Colonic mucosa (tissue), 4 donors: ENCODE measurements at regions of chr10 and their contacts with region 1.

Region 1: GRCh38 chr10:35889971-35890677 is 248.0 kb upstream of the FZD8 start:
- DNase-seq: peak; percentile 47
- H3K4me3 ChIP-seq: no peak overlapping the region
- H3K27ac ChIP-seq: peak overlapping the region; percentile 65
- H3K4me1 ChIP-seq: peaks cover 7% of the 10 kb centered on the region
- H3K27me3 ChIP-seq: no peaks in the 10 kb centered on the region
- CTCF ChIP-seq: no peak

Region 2: GRCh38 chr10:34341473-34341872 is 1548.7 kb before region 1 on chr10:
- intact Hi-C with region 1: no loop called
- DNase-seq: no peak
- H3K4me3 ChIP-seq: no peak overlapping the region
- H3K27ac ChIP-seq: no peak overlapping the region
- H3K4me1 ChIP-seq: peaks cover 3% of the 10 kb centered on the region
- H3K27me3 ChIP-seq: no peaks in the 10 kb centered on the region
- CTCF ChIP-seq: no peak

Region 3: DNA sequence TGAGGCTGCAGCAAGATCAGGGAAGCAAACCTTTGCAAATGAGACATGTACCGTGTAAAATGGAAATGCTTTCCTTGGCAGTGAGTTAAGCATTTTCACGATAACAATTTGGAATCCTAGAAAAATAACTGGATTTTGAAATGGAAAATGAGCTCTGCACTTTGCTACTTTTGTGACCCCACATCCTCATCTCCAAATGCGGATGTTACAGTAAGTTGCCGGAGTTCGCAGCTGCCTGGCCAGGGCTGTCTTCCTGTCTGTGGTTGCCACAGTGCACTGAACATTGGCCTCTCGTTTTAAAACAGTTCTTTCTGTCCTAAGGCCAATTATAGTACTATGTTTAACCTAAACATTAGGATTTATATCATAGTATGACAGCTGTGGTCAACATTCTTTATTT is 111.8 kb before region 1 on chr10:
- intact Hi-C with region 1: loop called (anchors 10 kb)
- DNase-seq: no peak
- H3K4me3 ChIP-seq: no peak overlapping the region
- H3K27ac ChIP-seq: no peak overlapping the region
- H3K4me1 ChIP-seq: no peaks in the 10 kb centered on the region
- H3K27me3 ChIP-seq: no peaks in the 10 kb centered on the region
- CTCF ChIP-seq: no peak

Region 4: GRCh38 chr10:35916791-35917190 is 26.7 kb after region 1 on chr10:
- intact Hi-C with region 1: no loop called
- DNase-seq: no peak
- H3K4me3 ChIP-seq: no peak overlapping the region
- H3K27ac ChIP-seq: no peak overlapping the region
- H3K4me1 ChIP-seq: no peaks in the 10 kb centered on the region
- H3K27me3 ChIP-seq: no peaks in the 10 kb centered on the region
- CTCF ChIP-seq: no peak

Region 5: GRCh38 chr10:36362257-36362656 is 472.1 kb after region 1 on chr10:
- intact Hi-C with region 1: no loop called
- DNase-seq: no peak
- H3K4me3 ChIP-seq: no peak overlapping the region
- H3K27ac ChIP-seq: no peak overlapping the region
- H3K4me1 ChIP-seq: no peaks in the 10 kb centered on the region
- H3K27me3 ChIP-seq: no peaks in the 10 kb centered on the region
- CTCF ChIP-seq: no peak